GM10248 (cell line): ENCODE measurements at regions of chr1 and their contacts with region 1.

Region 1: DNA sequence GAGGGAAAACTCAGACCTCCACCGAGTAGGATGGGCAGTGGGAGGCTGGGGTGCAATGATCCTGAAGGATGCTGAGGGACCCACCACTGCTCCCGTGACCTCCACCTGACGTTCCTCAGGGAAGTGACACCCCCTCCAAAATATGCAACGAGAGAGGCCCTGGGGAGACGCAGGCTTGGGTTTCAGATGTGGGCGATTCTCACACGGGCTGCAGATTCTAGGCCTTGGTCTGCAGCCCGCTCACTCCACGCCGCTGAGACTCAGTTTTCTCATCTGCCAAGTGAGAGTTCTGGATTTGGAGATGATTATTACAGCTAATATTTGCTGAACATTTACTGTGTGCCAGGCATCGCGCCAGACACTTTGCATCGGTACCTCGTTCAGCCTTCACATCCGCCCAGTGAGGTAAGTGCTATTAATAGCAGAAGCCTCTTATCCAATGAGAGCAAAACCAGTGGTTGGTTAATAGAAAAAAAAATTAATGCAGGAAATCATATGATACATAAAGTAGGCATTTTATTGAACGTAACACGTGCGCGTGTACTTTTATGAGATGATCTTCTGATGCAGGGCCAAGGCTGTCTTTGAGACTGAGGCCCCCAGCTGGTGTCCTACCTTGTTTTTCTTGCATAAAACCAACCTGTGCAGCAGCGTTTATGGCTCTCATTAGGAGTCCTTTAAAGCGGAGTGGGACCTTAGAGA is 102.0 kb upstream of the RUNX3 start:
- DNase-seq: peak; percentile 71
- CTCF ChIP-seq: peak; percentile 13

Region 2: DNA sequence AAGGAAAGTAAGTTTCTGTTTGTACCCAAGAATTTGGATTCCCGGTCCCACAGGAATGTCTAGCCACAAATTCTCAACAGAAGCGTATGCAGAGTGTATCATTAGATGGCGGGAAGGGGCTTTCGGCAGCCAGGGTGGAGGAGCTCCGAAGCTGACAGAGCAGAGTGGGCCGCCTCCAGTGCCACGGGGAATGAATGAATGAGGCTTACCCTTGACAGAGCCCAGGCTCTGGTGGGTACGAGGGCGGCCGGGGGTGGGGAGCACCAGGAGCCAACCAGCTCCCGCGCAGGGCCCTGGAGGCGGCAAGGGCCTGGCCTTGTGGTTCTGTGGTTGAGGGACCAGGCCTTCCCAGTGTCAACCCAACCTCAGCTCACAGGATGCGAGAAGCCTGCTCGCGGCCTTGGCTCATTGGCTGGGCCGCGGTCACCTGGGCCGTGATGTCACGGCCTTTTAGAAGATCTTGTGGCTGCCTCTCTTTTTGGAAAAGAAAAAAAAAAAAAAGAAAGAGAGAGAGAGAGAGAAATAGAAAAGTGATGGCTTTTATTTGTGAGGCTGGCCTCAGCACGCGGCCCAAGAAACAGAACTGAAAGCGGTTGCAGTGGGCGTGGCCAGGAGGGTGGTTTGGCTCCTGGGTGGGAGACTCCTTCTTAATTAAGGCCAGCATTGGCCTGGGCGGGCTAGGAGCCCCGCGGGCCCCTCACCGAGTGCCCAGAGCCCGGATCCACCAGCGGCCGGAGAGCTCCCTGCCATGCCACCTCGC is 67.1 kb before region 1 on chr1:
- CTCF ChIA-PET with region 1: interaction called, 63 read pairs
- POLR2A ChIA-PET with region 1: interaction called, 8 read pairs
- DNase-seq: peak; percentile 92
- CTCF ChIP-seq: no peak